Vagina (tissue), 2 donors: ENCODE measurements at regions of chr7 and their contacts with region 1.

Region 1: GRCh38 chr7:17680943-17681351 is 259.3 kb downstream of the SNX13 start:
- DNase-seq: no peak
- H3K4me3 ChIP-seq: no peak overlapping the region
- H3K27ac ChIP-seq: peak overlapping the region; percentile 81
- H3K4me1 ChIP-seq: peaks cover 31% of the 10 kb centered on the region
- H3K27me3 ChIP-seq: no peaks in the 10 kb centered on the region
- CTCF ChIP-seq: peak; percentile 38 to 70 (median 68)
- POLR2A ChIP-seq: no peak

Region 2: GRCh38 chr7:18345641-18346234 is 664.8 kb after region 1 on chr7:
- intact Hi-C with region 1: loop called (anchors 10 kb)
- DNase-seq: no peak
- H3K4me3 ChIP-seq: no peak overlapping the region
- H3K27ac ChIP-seq: no peak overlapping the region
- H3K4me1 ChIP-seq: no peaks in the 10 kb centered on the region
- H3K27me3 ChIP-seq: no peaks in the 10 kb centered on the region
- CTCF ChIP-seq: peak; percentile 46 to 80 (median 60)
- POLR2A ChIP-seq: no peak